GM10248 (cell line): ENCODE measurements at regions of chr6 and their contacts with region 1.

Region 1: GRCh38 chr6:99330159-99330558 is 19.3 kb downstream of the FAXC start:
- DNase-seq: peak; percentile 78
- CTCF ChIP-seq: peak; percentile 80

Region 2: DNA sequence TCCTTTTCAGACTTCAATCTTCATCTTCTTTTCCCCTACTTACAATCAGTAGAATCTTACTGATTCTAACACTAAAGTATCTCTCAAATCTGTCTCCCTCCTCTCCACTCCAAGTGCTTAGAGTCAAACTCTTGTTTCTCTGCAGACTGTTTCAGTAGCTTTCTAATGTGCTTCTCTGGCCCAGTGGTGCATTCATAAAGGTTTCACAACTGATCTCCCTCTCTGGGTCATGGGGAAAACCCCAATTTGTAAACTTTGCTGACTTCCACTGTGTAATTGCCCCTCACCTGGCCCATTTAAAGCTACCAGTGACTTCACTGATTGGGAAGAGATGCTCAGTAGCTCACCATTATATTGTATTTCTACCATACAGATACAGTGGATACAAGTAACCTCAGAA is 164.3 kb before region 1 on chr6:
- CTCF ChIA-PET with region 1: no interaction called
- POLR2A ChIA-PET with region 1: no interaction called
- DNase-seq: no peak
- CTCF ChIP-seq: no peak

Region 3: GRCh38 chr6:99310550-99310949 is 19.6 kb before region 1 on chr6:
- CTCF ChIA-PET with region 1: interaction called, 13 read pairs
- POLR2A ChIA-PET with region 1: no interaction called
- DNase-seq: no peak
- CTCF ChIP-seq: no peak

Region 4: GRCh38 chr6:99393698-99394531 is 63.8 kb after region 1 on chr6 and contains the start of gene COQ3:
- CTCF ChIA-PET with region 1: interaction called, 12 read pairs
- POLR2A ChIA-PET with region 1: no interaction called
- DNase-seq: peak; percentile 90
- CTCF ChIP-seq: no peak

Region 5: DNA sequence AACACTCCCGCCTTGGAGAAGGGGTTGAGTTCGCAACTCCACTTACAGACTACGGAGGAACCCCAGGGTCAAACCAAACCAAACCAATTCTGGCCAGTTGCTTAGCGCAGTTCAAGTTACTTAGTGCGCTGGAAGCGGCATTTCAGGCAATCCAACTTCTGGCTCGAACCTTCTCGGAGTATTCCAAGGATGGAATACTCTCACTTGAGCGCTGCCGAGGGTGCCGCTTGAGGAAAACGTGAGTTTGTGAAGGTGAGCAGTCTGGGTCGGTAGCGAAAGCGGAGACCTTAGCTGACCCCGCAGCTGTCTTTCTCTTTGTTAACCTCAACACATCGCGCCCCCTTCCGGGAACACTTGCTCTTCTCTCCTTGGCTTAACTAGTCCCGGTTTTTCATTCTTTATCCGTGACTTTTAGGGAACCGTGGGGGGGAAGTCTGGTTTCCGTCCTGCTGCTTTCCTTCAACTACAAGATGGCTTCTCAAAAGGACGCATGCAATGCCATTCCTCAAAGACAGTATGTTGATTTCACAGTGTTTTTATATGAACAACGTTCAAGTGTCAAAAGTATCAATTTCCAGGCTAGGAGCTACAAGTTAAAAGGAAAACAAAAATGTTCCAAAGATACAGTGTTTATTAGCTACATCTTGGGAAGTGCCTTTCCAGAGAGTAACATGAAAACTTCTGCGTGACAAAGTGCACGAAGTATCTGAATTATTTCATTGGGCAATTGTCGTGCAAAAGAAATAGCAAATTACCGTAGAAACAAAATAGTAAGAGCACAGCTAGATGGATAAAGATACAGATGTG is 95.7 kb after region 1 on chr6:
- CTCF ChIA-PET with region 1: interaction called, 27 read pairs
- POLR2A ChIA-PET with region 1: no interaction called
- DNase-seq: peak; percentile 54
- CTCF ChIP-seq: peak; percentile 47

Region 6: DNA sequence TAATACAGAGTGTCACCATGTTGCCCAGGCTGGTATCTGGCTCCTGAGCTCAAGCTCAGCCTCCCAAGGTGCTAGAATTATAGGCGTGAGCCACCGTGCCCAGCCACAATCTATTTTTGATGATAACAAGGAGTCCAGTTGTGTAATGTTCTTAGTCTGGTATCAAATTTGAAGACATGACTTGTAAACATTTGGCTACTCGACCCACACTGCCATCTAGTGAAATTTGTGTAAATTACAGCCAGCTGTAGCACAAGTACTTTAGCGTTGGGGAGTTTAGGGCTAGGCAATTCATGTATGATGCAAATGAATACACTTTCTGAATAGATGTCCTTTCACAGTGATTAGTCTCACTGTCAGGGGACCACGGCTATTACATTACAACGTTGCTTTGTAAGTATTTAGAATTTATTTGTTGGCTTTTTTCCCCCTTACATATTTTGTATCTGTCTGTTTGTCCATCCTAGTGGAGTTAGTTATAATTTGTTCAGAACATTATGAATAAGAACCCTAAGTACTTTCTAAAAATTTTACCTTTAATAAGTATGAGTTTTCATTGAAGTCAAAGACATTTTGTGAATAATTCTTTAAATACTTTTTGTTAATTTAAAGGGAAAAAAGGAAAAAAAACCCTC is 416.2 kb after region 1 on chr6:
- CTCF ChIA-PET with region 1: interaction called, 21 read pairs
- POLR2A ChIA-PET with region 1: no interaction called
- DNase-seq: peak; percentile 48
- CTCF ChIP-seq: peak; percentile 82